BJ (cell line): ENCODE measurements at regions of chr4 and their contacts with region 1.

Region 1: DNA sequence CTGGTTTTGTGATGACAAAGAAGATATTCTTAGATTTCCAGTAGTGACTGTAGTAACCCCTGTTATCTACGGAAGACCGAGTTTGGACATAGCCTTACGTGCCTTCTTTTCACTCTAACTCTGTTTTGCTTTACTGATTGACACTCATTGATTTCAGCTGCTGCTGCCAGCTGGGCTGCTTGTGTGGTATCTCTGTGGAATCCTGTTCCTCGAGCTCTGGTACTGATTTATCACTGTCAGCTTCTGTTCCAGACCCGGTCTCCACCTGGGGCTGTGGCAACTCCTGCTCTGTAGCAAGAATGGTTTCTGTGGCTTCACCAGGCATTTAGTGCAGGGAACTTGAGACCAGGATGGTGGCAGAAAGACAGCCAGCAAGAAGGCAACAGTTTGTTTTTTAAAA is 24.6 kb upstream of the LAP3 start:
- DNase-seq: no peak
- H3K4me3 ChIP-seq: no peak overlapping the region
- H3K27me3 ChIP-seq: peaks cover 2% of the 10 kb centered on the region; the same call in 1 of the 2 replicates
- CTCF ChIP-seq: no peak

Region 2: DNA sequence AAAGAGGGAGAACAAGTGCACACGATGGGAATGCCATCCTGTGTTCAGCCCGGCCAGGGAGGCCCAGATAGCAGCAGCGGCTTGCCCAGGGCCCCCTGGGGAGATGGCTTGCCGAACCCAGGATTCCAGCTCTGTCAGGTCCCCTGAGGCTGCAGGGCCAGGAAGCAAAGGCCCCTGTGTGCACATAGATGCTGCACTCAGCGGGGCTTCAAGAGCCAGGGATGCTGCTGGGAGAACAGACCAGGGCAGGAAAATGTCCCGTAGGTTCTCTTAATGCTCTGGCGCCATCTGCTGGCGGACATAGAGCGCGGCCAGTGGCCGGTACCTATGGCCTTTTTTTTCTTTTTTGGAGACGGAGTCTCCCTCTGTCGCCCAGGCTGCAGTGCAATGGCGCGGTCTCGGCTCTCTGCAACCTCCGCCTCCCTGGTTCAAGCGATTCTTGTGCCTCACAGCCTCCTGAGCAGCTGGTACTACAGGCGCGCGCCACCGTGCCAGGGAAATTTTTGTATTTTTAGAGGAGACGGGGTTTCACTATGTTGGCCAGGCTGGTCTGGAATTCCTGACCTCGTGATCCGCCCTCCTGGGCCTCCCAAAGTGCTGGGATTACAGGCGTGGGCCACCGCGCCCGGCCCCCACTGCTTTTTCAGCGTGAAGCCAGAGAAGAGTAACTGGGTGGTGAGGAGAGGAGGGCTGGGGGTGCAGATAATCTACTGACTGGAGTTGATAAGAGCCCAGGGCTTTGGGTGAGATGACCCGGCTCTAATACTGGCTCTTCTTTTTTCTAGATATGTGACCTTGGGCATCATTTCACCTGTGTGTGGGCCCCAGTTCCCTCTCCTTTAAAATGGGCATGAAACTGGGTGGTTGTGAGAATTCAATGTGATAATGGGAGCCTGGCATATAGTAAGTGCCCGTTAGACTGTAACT is 84.5 kb after region 1 on chr4:
- CTCF ChIA-PET with region 1: interaction called, 57 read pairs
- POLR2A ChIA-PET with region 1: interaction called, 6 read pairs
- DNase-seq: no peak
- H3K4me3 ChIP-seq: no peak overlapping the region
- H3K27me3 ChIP-seq: no peaks in the 10 kb centered on the region
- CTCF ChIP-seq: peak; percentile 91

Region 3: GRCh38 chr4:17810260-17811077 is 258.0 kb after region 1 on chr4 and contains the starts of genes DCAF16 and NCAPG:
- CTCF ChIA-PET with region 1: interaction called, 38 read pairs
- POLR2A ChIA-PET with region 1: no interaction called
- DNase-seq: peak; percentile 96
- H3K4me3 ChIP-seq: peak within 1 kb of the TSS; percentile 89
- H3K27me3 ChIP-seq: no peaks in the 10 kb centered on the region
- CTCF ChIP-seq: no peak
- polyA plus RNA-seq, gene DCAF16: 20.6 and 21.3 TPM in 2 replicates
- polyA plus RNA-seq, gene NCAPG: 7.8 and 14.4 TPM in 2 replicates